ENCODE measurements at regions of chr10 and their contacts with region 1.

Region 1: DNA sequence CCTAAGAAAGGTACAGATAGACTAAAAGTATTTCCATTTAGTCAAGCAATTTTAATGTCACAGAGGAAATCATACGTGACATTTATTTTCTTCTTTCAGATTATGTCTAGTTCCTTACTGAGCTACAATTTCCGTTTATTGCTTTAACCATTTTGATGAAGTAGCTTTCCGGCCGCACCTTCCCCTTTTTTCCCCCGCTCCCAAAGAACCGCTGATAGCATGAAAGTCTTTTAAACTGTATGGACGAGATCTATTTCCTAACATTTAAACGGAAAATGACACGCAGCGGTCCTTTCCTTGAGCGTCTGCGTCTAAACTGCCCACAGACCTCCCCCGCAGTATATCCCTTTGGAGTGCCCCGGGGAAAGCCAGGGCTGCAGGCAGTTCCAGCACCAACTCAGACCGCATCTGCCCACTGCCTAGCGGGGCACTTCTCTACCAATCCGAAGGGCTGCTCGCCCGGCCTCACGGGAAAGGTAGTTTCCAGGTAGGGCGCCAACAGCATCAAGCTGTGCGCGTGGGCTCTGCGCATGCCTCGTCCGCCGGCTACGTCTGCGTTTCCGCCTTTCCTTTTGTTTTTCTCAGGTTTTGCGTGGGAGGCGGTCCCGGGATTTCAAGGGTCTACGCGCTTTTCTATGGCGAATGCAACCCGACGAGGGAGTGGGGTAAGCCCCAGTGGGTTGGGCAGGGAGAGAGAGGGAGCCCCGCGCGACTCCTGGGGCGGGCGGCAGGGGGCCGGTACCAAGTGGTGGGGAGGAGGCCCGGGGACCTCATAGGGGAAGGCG is at the start of gene ZNF33A:
- DNase-seq: peak; percentile 91
- ATAC-seq: peak; percentile 92
- H3K4me3 ChIP-seq: peak within 1 kb of the TSS; percentile 58 to 76
- H3K27ac ChIP-seq: peak within 1 kb of the TSS; percentile 81
- H3K4me1 ChIP-seq: peaks cover 0 to 16% of the 10 kb centered on the region in 2 experiments; a peak in 2 of 4 replicates
- H3K27me3 ChIP-seq: no peaks in the 10 kb centered on the region
- CTCF ChIP-seq: no peak
- POLR2A ChIP-seq: peak; percentile 86
- RAD21 ChIP-seq: no peak
- total RNA-seq, gene ZNF33A: 21.2 TPM

Region 2: GRCh38 chr10:37857287-37858211 is 152.8 kb before region 1 on chr10 and contains the start of gene ZNF248:
- CTCF ChIA-PET with region 1: no interaction called
- POLR2A ChIA-PET with region 1: no interaction called
- RAD21 ChIA-PET with region 1: no interaction called
- intact Hi-C with region 1: loop called (anchors 10 kb)
- DNase-seq: peak; percentile 90
- ATAC-seq: peak; percentile 95
- H3K4me3 ChIP-seq: peak within 1 kb of the TSS; percentile 85 to 91
- H3K27ac ChIP-seq: peak within 1 kb of the TSS; percentile 98
- H3K4me1 ChIP-seq: peaks cover 3 to 17% of the 10 kb centered on the region in 2 experiments; a peak in 2 of 4 replicates
- H3K27me3 ChIP-seq: no peaks in the 10 kb centered on the region
- CTCF ChIP-seq: no peak
- POLR2A ChIP-seq: peak; percentile 55
- RAD21 ChIP-seq: no peak
- total RNA-seq, gene ZNF248: 6.2 TPM

Region 3: DNA sequence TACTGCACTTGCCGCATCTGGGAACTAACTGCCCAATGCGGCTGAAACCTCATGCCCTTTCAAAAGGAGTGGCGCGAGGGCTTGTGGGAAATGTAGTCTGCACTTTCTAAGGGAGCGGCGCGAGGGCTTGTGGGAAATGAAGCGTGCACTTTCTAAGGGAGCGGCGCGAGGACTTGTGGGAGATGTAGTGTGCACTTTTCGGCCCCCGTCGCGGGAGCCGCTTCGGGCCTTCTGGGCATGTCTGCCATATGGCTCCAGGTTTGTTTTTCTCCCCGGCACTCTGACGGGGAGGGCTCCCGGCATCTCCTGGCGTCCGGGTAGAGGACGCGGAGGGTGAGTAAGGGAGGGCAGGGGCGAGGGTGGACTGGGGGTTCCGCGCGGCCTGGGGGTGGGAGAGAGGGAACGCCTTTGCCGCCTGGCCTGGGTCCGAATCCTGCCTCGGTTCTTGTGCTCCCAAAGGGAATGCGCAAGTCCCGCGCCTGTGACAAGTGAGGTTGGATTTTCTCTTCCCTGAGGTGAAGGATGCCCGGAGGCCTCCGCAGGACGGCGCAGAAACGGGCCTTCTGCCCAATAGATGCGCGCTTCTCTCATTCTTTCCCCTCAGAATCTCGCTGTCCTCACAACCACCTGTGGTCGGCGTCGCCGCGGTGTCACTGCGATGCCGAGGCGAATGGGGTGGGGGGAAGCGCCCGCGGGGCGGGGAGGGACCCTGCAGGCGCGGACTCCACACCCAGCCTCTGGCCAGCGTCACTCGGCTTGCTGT is 84.0 kb after region 1 on chr10 and contains the start of gene ZNF37A:
- CTCF ChIA-PET with region 1: no interaction called
- POLR2A ChIA-PET with region 1: no interaction called
- RAD21 ChIA-PET with region 1: no interaction called
- intact Hi-C with region 1: loop called (anchors 2 kb)
- DNase-seq: peak; percentile 95
- ATAC-seq: peak; percentile 96
- H3K4me3 ChIP-seq: peak within 1 kb of the TSS; percentile 83 to 88
- H3K27ac ChIP-seq: peak within 1 kb of the TSS; percentile 62; the same call in 1 of the 2 replicates
- H3K4me1 ChIP-seq: peaks cover 0 to 14% of the 10 kb centered on the region in 2 experiments; a peak in 2 of 4 replicates
- H3K27me3 ChIP-seq: no peaks in the 10 kb centered on the region
- CTCF ChIP-seq: no peak
- POLR2A ChIP-seq: peak; percentile 33
- RAD21 ChIP-seq: no peak
- total RNA-seq, gene ZNF37A: 18.5 TPM